ENCODE measurements at regions of chr5 and their contacts with region 1.

Region 1: GRCh38 chr5:110757118-110757729 is 18.4 kb downstream of the SLC25A46 start:
- DNase-seq: peak; percentile 38
- ATAC-seq: no peak
- H3K4me3 ChIP-seq: no peak overlapping the region
- H3K27ac ChIP-seq: no peak overlapping the region
- H3K4me1 ChIP-seq: no peaks in the 10 kb centered on the region
- H3K27me3 ChIP-seq: no peaks in the 10 kb centered on the region
- CTCF ChIP-seq: peak; percentile 70
- EP300 ChIP-seq: no peak
- POLR2A ChIP-seq: no peak
- RAD21 ChIP-seq: no peak

Region 2: GRCh38 chr5:110865400-110866094 is 108.3 kb after region 1 on chr5:
- CTCF ChIA-PET with region 1: interaction called, 3 read pairs
- POLR2A ChIA-PET with region 1: no interaction called
- in situ Hi-C with region 1: no loop called
- intact Hi-C with region 1: loop called (anchors 1 kb)
- DNase-seq: peak; percentile 28
- ATAC-seq: peak; percentile 94
- H3K4me3 ChIP-seq: no peak overlapping the region
- H3K27ac ChIP-seq: no peak overlapping the region
- H3K4me1 ChIP-seq: no peaks in the 10 kb centered on the region
- H3K27me3 ChIP-seq: no peaks in the 10 kb centered on the region
- CTCF ChIP-seq: peak; percentile 69
- EP300 ChIP-seq: no peak
- POLR2A ChIP-seq: no peak
- RAD21 ChIP-seq: no peak

Region 3: GRCh38 chr5:111063700-111064322 is 306.6 kb after region 1 on chr5:
- CTCF ChIA-PET with region 1: interaction called, 7 read pairs
- POLR2A ChIA-PET with region 1: no interaction called
- in situ Hi-C with region 1: loop called (anchors 10 kb)
- intact Hi-C with region 1: loop called (anchors 1 kb)
- DNase-seq: peak; percentile 31
- ATAC-seq: peak; percentile 77
- H3K4me3 ChIP-seq: no peak overlapping the region
- H3K27ac ChIP-seq: no peak overlapping the region
- H3K4me1 ChIP-seq: no peaks in the 10 kb centered on the region
- H3K27me3 ChIP-seq: peaks cover 0 to 3% of the 10 kb centered on the region in 2 experiments; a peak in 2 of 5 replicates
- CTCF ChIP-seq: peak; percentile 64
- EP300 ChIP-seq: no peak
- POLR2A ChIP-seq: no peak
- RAD21 ChIP-seq: no peak

Region 4: GRCh38 chr5:111092062-111092853 is 335.0 kb after region 1 on chr5 and contains the start of gene WDR36:
- CTCF ChIA-PET with region 1: no interaction called
- POLR2A ChIA-PET with region 1: no interaction called
- in situ Hi-C with region 1: no loop called
- intact Hi-C with region 1: loop called (anchors 10 kb)
- DNase-seq: peak; percentile 86
- ATAC-seq: peak; percentile 99
- H3K4me3 ChIP-seq: peak within 1 kb of the TSS; percentile 88 to 94 (median 90)
- H3K27ac ChIP-seq: peak within 1 kb of the TSS; percentile 75
- H3K4me1 ChIP-seq: peaks cover 30% of the 10 kb centered on the region
- H3K27me3 ChIP-seq: no peaks in the 10 kb centered on the region; a peak in 1 of 5 replicates
- CTCF ChIP-seq: 0 out of 2 replicates have a peak, but pooled peaks have one; percentile 11
- EP300 ChIP-seq: peak; percentile 34 to 41; a peak in 3 of 4 replicates
- POLR2A ChIP-seq: peak; percentile 91 to 92
- RAD21 ChIP-seq: 0 out of 2 replicates have a peak, but pooled peaks have one; percentile 33
- total RNA-seq, gene WDR36: 40.6 and 62.6 TPM in 2 replicates

Region 5: GRCh38 chr5:111278845-111279504 is 521.8 kb after region 1 on chr5:
- CTCF ChIA-PET with region 1: interaction called, 5 read pairs
- POLR2A ChIA-PET with region 1: no interaction called
- in situ Hi-C with region 1: no loop called
- intact Hi-C with region 1: loop called (anchors 1 kb)
- DNase-seq: peak; percentile 45
- ATAC-seq: peak; percentile 97
- H3K4me3 ChIP-seq: no peak overlapping the region
- H3K27ac ChIP-seq: no peak overlapping the region
- H3K4me1 ChIP-seq: 0 out of 2 replicates have a peak, but pooled peaks cover 4% of the 10 kb centered on the region
- H3K27me3 ChIP-seq: no peaks in the 10 kb centered on the region
- CTCF ChIP-seq: peak; percentile 77
- EP300 ChIP-seq: no peak
- POLR2A ChIP-seq: no peak
- RAD21 ChIP-seq: peak; percentile 60

Region 6: GRCh38 chr5:112160652-112161391 is 1403.6 kb after region 1 on chr5:
- CTCF ChIA-PET with region 1: no interaction called
- POLR2A ChIA-PET with region 1: no interaction called
- in situ Hi-C with region 1: no loop called
- intact Hi-C with region 1: loop called (anchors 10 kb)
- DNase-seq: peak; percentile 78
- ATAC-seq: peak; percentile 91
- H3K4me3 ChIP-seq: peak overlapping the region; percentile 84 to 89 (median 88)
- H3K27ac ChIP-seq: peak overlapping the region; percentile 78
- H3K4me1 ChIP-seq: peaks cover 44% of the 10 kb centered on the region
- H3K27me3 ChIP-seq: peaks cover 0 to 5% of the 10 kb centered on the region in 2 experiments; a peak in 2 of 5 replicates
- CTCF ChIP-seq: peak; percentile 99
- EP300 ChIP-seq: peak; percentile 57 to 81; a peak in 3 of 4 replicates
- POLR2A ChIP-seq: peak; percentile 98 to 99
- RAD21 ChIP-seq: peak; percentile 63; the same call in 1 of the 2 replicates